ENCODE measurements at regions of chr22 and their contacts with region 1.

Region 1: GRCh38 chr22:49767355-49768062 is 60.2 kb downstream of the BRD1 start:
- DNase-seq: peak in 9 of 35 experiments; percentile 4 to 68 (median 16)
- ATAC-seq: peak; percentile 29 to 46 (median 41)
- H3K4me3 ChIP-seq: no peak overlapping the region
- H3K4me3 Mint-ChIP-seq: no peak overlapping the region
- H3K27ac ChIP-seq: no peak overlapping the region
- H3K27ac Mint-ChIP-seq: peak overlapping the region; percentile 16 to 52
- H3K4me1 ChIP-seq: peaks cover 3 to 5% of the 10 kb centered on the region in 2 experiments
- H3K4me1 Mint-ChIP-seq: peaks cover 0 to 6% (median 4%) of the 10 kb centered on the region in 3 donors
- H3K27me3 ChIP-seq: no peaks in the 10 kb centered on the region
- H3K27me3 Mint-ChIP-seq: no peaks in the 10 kb centered on the region

Region 2: DNA sequence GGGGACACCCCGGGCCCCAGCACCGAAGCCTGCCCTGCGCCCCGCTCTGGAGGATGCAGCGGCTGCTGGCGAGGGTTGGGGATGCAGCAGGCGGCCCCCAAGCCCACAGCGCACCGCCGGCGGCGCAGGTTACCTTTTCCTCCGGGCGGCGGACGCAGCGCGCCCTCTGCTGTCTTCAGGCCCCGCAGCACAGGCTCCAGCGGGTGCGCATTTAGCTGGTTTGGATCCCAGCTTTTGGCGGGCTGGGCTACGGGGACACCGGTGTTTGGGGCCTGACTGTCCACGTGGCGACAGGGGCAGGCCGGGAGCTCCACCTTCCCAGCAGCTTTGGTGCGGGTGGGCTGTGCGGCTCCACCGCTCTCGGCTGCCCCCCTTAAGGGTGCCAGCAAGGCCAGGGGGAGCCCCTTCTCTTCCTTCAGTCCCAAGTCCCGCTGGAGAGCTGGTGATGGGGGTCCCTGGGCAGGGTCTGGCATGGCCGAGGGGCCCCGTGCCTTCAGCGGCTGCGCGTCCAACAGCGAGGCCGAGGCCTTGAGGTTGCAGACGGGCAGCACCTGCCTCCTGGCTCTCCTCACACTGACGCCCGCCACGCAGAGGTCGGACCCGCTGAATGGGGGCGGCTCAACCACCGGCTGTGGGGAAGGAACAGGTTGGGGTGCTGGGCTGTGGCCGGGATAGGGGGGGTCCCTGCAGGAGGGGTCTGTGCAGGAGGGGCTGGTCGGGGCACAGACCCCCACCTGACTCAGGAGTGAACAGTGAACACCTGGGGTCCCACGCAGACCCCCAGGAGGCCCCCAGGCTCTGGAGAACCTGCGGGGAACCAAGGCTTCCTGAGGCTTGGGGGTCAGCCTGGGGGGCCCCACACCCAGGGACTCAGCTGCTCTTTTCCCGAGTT is 263.0 kb after region 1 on chr22:
- CTCF ChIA-PET with region 1: interaction called, 3 to 11 read pairs
- POLR2A ChIA-PET with region 1: no interaction called
- DNase-seq: peak; percentile 63 to 89 (median 81)
- ATAC-seq: peak; percentile 87 to 93 (median 90)
- H3K4me3 ChIP-seq: no peak overlapping the region
- H3K4me3 Mint-ChIP-seq: no peak overlapping the region
- H3K27ac ChIP-seq: no peak overlapping the region
- H3K27ac Mint-ChIP-seq: no peak overlapping the region
- H3K4me1 ChIP-seq: peaks cover 0 to 37% of the 10 kb centered on the region in 2 experiments
- H3K4me1 Mint-ChIP-seq: peaks cover 0 to 18% (median 8%) of the 10 kb centered on the region in 3 donors
- H3K27me3 ChIP-seq: peaks cover 0 to 72% of the 10 kb centered on the region in 2 experiments
- H3K27me3 Mint-ChIP-seq: peaks cover 0 to 28% of the 10 kb centered on the region in 2 donors